ENCODE measurements at regions of chr17 and their contacts with region 1.

Region 1: GRCh38 chr17:37286430-37286829 is 89.4 kb upstream of the C17orf78 start:
- DNase-seq: no peak
- H3K4me3 Mint-ChIP-seq: no peak overlapping the region
- H3K27ac Mint-ChIP-seq: peak overlapping the region; percentile 13
- H3K4me1 Mint-ChIP-seq: peaks cover 8% of the 10 kb centered on the region
- H3K27me3 Mint-ChIP-seq: no peaks in the 10 kb centered on the region
- CTCF ChIP-seq: no peak

Region 2: DNA sequence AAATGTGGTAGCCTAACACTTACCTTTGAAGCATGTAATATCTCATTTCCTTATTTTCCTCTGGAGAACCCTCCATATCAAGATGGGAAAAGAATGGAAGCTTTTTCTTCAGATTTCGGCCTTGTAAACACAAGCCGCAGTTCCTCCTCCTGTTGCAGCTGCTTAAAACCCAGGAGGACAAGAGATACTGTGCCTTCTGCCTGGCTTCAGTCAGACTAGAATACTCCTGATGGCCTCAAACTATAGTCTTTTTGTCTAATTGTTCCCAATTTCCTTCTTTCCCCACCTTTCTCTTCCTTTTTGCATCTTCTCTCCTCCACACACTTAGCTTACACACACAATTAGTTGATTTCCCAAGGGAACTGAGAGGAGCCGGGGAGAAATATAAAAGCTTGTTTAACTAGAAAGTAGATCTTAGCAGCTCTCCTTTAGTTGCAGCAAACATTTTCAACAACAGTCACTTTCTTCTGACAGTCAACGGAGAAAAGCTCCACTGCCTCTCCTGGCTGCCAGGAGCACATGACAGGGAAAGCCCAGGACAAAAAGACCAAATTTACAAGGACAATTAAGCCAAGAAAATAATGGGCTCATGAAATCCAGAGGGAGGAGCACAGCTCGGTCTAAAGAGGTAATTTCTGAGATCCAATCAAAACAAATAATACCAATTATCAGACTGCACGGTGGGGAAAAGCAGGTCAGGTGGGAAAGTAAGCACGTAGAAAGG is 13.0 kb after region 1 on chr17:
- CTCF ChIA-PET with region 1: interaction called, 14 read pairs
- intact Hi-C with region 1: no loop called
- DNase-seq: no peak
- H3K4me3 Mint-ChIP-seq: no peak overlapping the region
- H3K27ac Mint-ChIP-seq: no peak overlapping the region
- H3K4me1 Mint-ChIP-seq: peaks cover 24% of the 10 kb centered on the region
- H3K27me3 Mint-ChIP-seq: no peaks in the 10 kb centered on the region
- CTCF ChIP-seq: no peak

Region 3: DNA sequence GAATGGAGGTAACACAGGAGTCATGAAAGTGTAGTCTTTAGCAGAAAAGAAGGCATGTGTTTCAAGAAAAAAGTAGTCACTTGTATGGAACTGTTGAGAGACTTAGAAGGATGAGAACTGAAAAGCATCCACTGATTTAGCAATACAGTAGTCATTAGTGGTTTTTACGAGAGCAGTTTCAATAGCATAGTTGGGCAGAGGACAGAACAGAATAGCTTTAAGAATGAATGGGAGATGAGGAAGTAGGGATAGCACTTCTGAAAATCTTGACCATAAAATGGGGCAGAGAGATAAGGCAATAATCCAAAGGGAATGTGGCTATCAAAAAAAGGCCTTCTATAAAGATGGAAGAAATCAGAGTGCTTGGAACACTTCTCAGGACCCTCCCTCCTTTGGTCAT is 24.5 kb after region 1 on chr17:
- CTCF ChIA-PET with region 1: no interaction called
- intact Hi-C with region 1: no loop called
- DNase-seq: no peak
- H3K4me3 Mint-ChIP-seq: no peak overlapping the region
- H3K27ac Mint-ChIP-seq: no peak overlapping the region
- H3K4me1 Mint-ChIP-seq: peaks cover 14% of the 10 kb centered on the region
- H3K27me3 Mint-ChIP-seq: no peaks in the 10 kb centered on the region
- CTCF ChIP-seq: no peak